ENCODE measurements at regions of chr20 and their contacts with region 1.

Region 1: DNA sequence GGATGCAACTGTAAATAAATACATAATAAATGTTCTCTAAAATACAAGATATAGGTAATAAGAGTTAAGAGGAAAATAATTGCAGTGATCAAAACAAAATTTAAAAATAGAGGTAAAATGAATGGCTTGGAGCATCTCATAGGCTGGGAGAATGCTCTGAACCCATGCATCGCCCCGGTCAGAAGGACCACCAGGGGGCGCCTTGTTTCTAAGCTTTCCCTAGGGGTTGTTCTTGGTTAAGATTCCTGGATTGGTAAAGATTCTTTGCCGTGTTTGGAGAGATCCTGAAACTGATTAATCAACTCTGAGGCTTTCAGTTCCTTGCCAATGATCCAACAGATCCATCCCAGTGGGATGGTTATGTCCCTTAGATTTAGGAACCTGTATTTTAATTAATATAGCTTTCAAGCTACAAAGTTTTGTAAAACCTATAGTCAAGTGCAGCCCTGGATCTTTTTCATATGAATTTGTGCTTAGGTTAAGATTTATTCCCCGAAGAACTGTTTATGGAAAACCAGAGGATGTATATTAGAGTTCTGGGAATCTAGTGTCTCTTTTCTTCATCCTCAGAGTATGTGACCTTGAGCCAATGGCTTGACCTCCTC is 45.3 kb upstream of the PRELID3B start:
- DNase-seq: peak; percentile 85
- H3K4me3 ChIP-seq: no peak overlapping the region
- H3K27ac ChIP-seq: no peak overlapping the region
- H3K4me1 ChIP-seq: peaks cover 0 to 4% (median 2%) of the 10 kb centered on the region in 4 donors
- H3K27me3 ChIP-seq: no peaks in the 10 kb centered on the region
- CTCF ChIP-seq: peak; percentile 63 to 89 (median 80)
- EP300 ChIP-seq: no peak
- POLR2A ChIP-seq: no peak

Region 2: GRCh38 chr20:59222253-59223181 is 134.6 kb after region 1 on chr20:
- intact Hi-C with region 1: loop called (anchors 1 kb)
- DNase-seq: peak; percentile 86
- H3K4me3 ChIP-seq: peak overlapping the region; percentile 45 to 69 (median 58)
- H3K27ac ChIP-seq: peak overlapping the region; percentile 38 to 65 (median 48)
- H3K4me1 ChIP-seq: peaks cover 0 to 24% (median 9%) of the 10 kb centered on the region in 4 donors
- H3K27me3 ChIP-seq: peaks cover 0 to 28% (median 4%) of the 10 kb centered on the region in 3 donors
- CTCF ChIP-seq: peak; percentile 55 to 93 (median 77)
- EP300 ChIP-seq: no peak
- POLR2A ChIP-seq: no peak

Region 3: GRCh38 chr20:59232618-59233017 is 144.7 kb after region 1 on chr20:
- intact Hi-C with region 1: no loop called
- DNase-seq: no peak
- H3K4me3 ChIP-seq: no peak overlapping the region
- H3K27ac ChIP-seq: no peak overlapping the region
- H3K4me1 ChIP-seq: no peaks in the 10 kb centered on the region
- H3K27me3 ChIP-seq: peaks cover 0 to 18% (median 0%) of the 10 kb centered on the region in 3 donors
- CTCF ChIP-seq: no peak
- EP300 ChIP-seq: no peak
- POLR2A ChIP-seq: no peak

Region 4: GRCh38 chr20:59403261-59403961 is 315.5 kb after region 1 on chr20:
- intact Hi-C with region 1: loop called (anchors 5 kb)
- DNase-seq: no peak
- H3K4me3 ChIP-seq: peak overlapping the region in 2 of 4 donors; percentile 4 to 8
- H3K27ac ChIP-seq: no peak overlapping the region
- H3K4me1 ChIP-seq: peaks cover 0 to 16% (median 13%) of the 10 kb centered on the region in 4 donors
- H3K27me3 ChIP-seq: peaks cover 8 to 83% (median 29%) of the 10 kb centered on the region in 3 donors
- CTCF ChIP-seq: peak; percentile 52 to 85 (median 84)
- EP300 ChIP-seq: no peak
- POLR2A ChIP-seq: no peak

Region 5: GRCh38 chr20:59455402-59456341 is 367.7 kb after region 1 on chr20:
- intact Hi-C with region 1: loop called (anchors 1 kb)
- DNase-seq: peak; percentile 52
- H3K4me3 ChIP-seq: peak overlapping the region in 1 of 4 donors; percentile 12
- H3K27ac ChIP-seq: no peak overlapping the region
- H3K4me1 ChIP-seq: peaks cover 0 to 5% (median 1%) of the 10 kb centered on the region in 4 donors
- H3K27me3 ChIP-seq: peaks cover 0 to 3% (median 0%) of the 10 kb centered on the region in 3 donors
- CTCF ChIP-seq: peak in 3 of 4 experiments; percentile 49 to 62 (median 61)
- EP300 ChIP-seq: no peak
- POLR2A ChIP-seq: no peak

Measured in sigmoid colon (tissue), 7 donors.